ENCODE measurements at regions of chr5 and their contacts with region 1.

Region 1: GRCh38 chr5:173972925-173973615 is 15.9 kb upstream of the C5orf47 start:
- DNase-seq: peak; percentile 68 to 82
- ATAC-seq: peak; percentile 83 to 84
- H3K4me3 ChIP-seq: peak overlapping the region; percentile 45 to 63 (median 54)
- H3K27ac ChIP-seq: peak overlapping the region; percentile 74 to 85 (median 78)
- H3K4me1 ChIP-seq: peaks cover 5 to 8% of the 10 kb centered on the region in 2 donors
- H3K27me3 ChIP-seq: no peaks in the 10 kb centered on the region
- CTCF ChIP-seq: peak; percentile 88 to 98 (median 94)
- POLR2A ChIP-seq: no peak

Region 2: DNA sequence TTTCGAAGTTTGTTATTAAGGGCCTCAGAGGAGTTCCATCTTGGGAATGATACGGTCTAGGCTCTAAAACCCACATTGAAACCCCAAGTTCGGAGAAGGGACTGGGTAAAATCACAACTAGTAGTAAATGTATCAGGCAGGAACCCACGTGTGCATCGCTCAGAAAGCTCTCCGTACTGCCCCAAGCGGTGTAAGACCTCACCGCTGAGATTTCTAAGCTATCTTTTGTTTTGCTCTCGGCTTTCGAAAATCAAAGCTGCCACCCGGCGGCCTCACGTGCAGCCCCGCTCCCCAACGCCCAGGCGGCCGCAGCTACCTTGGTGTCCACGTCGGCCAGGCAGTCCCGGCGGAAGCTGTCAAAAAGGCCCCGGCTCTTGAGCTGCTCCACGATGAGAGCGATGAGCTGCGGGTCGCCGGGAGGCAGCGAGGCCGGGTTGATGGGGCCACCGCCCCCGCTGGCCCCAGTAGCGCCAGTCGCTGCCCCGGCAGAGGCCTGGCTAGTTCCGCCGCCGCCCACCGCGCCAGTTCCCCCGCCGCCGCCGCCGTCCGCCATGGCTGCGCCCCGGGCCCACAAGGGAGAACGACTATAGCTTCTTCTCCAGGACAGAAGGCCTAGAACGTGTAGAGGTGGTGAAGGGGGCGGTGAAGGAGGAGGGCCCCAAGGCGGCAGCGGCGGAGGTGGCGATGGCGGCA is 357.0 kb before region 1 on chr5:
- in situ Hi-C with region 1: loop called (anchors 5 kb)
- intact Hi-C with region 1: loop called (anchors 1 kb)
- DNase-seq: peak; percentile 35 to 61
- ATAC-seq: peak; percentile 73 to 77
- H3K4me3 ChIP-seq: peak overlapping the region; percentile 75 to 91 (median 88)
- H3K27ac ChIP-seq: peak overlapping the region; percentile 95 to 98 (median 97)
- H3K4me1 ChIP-seq: peaks cover 40 to 49% of the 10 kb centered on the region in 2 donors
- H3K27me3 ChIP-seq: no peaks in the 10 kb centered on the region
- CTCF ChIP-seq: peak; percentile 46 to 81 (median 67)
- POLR2A ChIP-seq: no peak

Region 3: DNA sequence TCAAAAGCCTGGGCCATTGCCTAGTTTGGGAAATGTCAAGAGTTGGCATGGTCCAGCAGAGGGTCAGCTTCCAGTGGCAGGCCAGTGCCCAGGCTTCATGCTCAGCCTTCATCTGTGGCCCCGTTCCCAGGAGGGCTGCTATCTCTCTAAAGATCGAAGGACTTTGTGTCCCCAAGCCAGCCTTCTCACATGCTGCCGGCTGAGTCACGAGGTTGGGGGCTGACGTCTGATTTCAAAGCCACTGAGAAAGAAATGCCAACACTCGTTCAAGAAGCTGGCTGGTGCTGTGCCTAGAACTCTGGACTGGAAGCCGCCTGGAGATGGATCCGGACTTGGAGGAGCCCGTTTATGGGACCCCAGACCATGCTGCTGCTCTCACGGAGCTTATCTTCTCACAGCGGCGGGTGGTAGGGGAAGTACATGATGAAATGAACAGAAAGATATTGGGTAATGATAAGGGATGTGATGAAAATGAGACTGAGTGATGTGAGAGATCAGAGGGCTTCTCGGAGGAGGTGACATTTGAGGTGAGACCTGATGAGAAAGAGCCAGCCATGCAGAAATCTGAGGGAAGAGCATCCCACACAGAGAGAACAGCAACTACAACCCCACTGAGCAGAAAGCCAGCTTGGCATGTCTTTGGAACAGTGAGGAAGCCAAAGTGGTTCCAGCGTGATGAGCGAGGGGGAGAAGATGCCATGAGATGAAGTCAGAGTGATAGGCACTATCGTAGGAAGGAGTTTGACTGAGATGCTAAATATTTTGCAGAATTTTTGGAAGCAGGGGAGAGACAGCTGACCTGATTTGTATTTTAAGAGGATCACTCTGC is 301.7 kb before region 1 on chr5:
- in situ Hi-C with region 1: no loop called
- intact Hi-C with region 1: loop called (anchors 5 kb)
- DNase-seq: peak; percentile 92 to 97
- ATAC-seq: peak; percentile 85 to 88
- H3K4me3 ChIP-seq: peak overlapping the region; percentile 32 to 48 (median 44)
- H3K27ac ChIP-seq: peak overlapping the region; percentile 87 to 91 (median 88)
- H3K4me1 ChIP-seq: peaks cover 35 to 44% of the 10 kb centered on the region in 2 donors
- H3K27me3 ChIP-seq: no peaks in the 10 kb centered on the region
- CTCF ChIP-seq: no peak
- POLR2A ChIP-seq: peak; percentile 66 to 67

Region 4: GRCh38 chr5:173764321-173765029 is 208.6 kb before region 1 on chr5:
- in situ Hi-C with region 1: loop called (anchors 10 to 25 kb)
- intact Hi-C with region 1: no loop called
- DNase-seq: peak; percentile 91 to 96
- ATAC-seq: peak; percentile 59 to 65
- H3K4me3 ChIP-seq: no peak overlapping the region
- H3K27ac ChIP-seq: peak overlapping the region; percentile 90 to 95 (median 94)
- H3K4me1 ChIP-seq: peaks cover 57 to 63% of the 10 kb centered on the region in 2 donors
- H3K27me3 ChIP-seq: no peaks in the 10 kb centered on the region
- CTCF ChIP-seq: no peak
- POLR2A ChIP-seq: peak; percentile 8 to 57

Region 5: GRCh38 chr5:173887610-173888472 is 85.2 kb before region 1 on chr5 and contains the start of gene CPEB4:
- in situ Hi-C with region 1: loop called in 2 of 4 experiments (anchors 5 to 10 kb)
- intact Hi-C with region 1: loop called (anchors 1 kb)
- DNase-seq: peak; percentile 99 to 100
- ATAC-seq: peak; percentile 92 to 94
- H3K4me3 ChIP-seq: peak within 1 kb of the TSS; percentile 79 to 90 (median 88)
- H3K27ac ChIP-seq: peak within 1 kb of the TSS; percentile 94 to 99 (median 96)
- H3K4me1 ChIP-seq: peaks cover 0 to 14% of the 10 kb centered on the region in 2 donors
- H3K27me3 ChIP-seq: no peaks in the 10 kb centered on the region
- CTCF ChIP-seq: no peak
- POLR2A ChIP-seq: peak; percentile 99 to 100
- total RNA-seq, gene CPEB4: 97.8 to 109 (median 102) TPM

Measured in gastrocnemius medialis (tissue), 4 donors.